Mammary epithelial cell (primary cell): ENCODE measurements at regions of chr1 and their contacts with region 1.

Region 1: GRCh38 chr1:26169669-26170471 is at the start of gene ZNF593:
- DNase-seq: peak; percentile 81
- H3K4me3 ChIP-seq: peak within 1 kb of the TSS; percentile 73 to 84 (median 76)
- H3K27ac ChIP-seq: peak within 1 kb of the TSS; percentile 75
- H3K4me1 ChIP-seq: peaks cover 9% of the 10 kb centered on the region
- H3K27me3 ChIP-seq: no peaks in the 10 kb centered on the region
- CTCF ChIP-seq: peak; percentile 83 to 94
- total RNA-seq, gene ZNF593: 31.5 to 41.5 TPM

Region 2: DNA sequence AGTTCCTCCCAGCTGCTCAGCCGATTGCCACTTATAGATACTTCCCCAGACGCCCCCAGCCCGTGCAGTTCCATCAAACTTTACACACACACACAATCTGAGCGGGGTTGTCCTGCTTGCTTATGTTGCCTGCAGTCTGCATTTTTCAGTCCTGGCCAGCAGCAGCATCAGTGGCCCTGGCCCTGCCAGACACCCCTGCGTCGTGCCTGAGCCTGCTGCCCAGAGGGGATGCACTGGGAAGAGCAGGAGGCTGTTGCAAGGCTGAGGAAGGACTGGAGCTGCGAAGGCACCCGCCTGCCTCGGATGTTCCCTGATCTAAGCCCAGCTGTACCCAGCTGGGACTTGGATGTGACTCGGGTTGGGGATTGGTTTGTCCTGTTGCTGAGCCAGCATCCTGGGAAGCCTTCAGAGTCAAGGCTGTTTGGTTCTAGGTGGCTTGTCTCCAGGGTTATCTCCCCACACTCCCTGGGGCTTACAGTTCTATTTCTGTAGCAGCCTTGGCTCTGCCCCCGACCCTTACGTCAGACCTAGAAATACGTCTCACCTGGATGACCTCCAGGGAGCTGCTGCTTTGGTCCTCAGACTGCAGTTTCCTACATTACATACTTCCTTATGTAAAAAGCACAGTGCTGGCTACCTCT is 511.0 kb before region 1 on chr1:
- CTCF ChIA-PET with region 1: no interaction called
- dilution Hi-C with region 1: no loop called
- in situ Hi-C with region 1: no loop called
- intact Hi-C with region 1: no loop called
- DNase-seq: no peak
- H3K4me3 ChIP-seq: no peak overlapping the region
- H3K27ac ChIP-seq: no peak overlapping the region
- H3K4me1 ChIP-seq: no peaks in the 10 kb centered on the region
- H3K27me3 ChIP-seq: no peaks in the 10 kb centered on the region
- CTCF ChIP-seq: no peak

Region 3: DNA sequence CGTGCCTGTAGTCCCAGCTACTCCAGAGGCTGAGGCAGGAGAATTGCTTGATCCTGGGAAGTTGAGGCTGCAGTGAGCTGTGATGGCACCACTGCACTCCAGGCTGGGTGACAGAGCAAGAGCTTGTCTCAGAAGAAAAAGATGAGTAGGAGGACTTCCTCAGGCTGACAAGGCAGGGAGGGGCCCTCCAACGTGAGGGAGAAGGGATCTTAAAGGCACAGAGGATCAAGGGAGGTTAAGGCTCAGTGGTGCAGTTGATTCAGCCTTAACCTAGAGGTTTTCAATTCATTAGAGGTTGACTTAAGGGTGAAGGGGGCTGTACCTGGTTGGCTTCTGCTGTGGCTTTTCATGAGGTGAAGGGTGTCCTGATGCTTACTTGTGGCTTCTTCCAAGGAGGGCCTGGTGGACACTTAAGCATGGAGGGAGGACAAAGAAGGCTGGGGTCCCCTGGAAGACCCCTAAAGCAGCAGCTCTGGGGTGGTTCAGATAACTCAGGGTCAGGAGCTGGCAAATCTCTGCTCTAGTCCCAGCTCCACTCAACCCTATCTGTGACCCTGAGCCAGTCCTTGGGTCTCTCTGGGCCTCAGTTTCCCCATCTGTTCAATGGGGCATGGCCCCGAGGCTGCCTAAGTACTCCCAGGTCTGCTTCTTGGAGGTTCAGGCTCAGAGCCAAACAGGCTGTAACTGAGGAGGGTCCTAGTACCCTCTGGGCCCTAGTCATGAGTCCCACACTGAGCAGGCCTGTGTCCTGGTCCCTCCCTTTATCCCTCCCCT is 142.0 kb before region 1 on chr1:
- CTCF ChIA-PET with region 1: interaction called, 19 read pairs
- dilution Hi-C with region 1: no loop called
- in situ Hi-C with region 1: loop called in 1 of 2 experiments (anchors 25 kb)
- intact Hi-C with region 1: no loop called
- DNase-seq: peak; percentile 27
- H3K4me3 ChIP-seq: no peak overlapping the region
- H3K27ac ChIP-seq: no peak overlapping the region
- H3K4me1 ChIP-seq: no peaks in the 10 kb centered on the region
- H3K27me3 ChIP-seq: no peaks in the 10 kb centered on the region
- CTCF ChIP-seq: no peak

Region 4: GRCh38 chr1:26094677-26095383 is 75.0 kb before region 1 on chr1:
- CTCF ChIA-PET with region 1: no interaction called
- dilution Hi-C with region 1: no loop called
- in situ Hi-C with region 1: no loop called
- intact Hi-C with region 1: no loop called
- DNase-seq: no peak
- H3K4me3 ChIP-seq: no peak overlapping the region
- H3K27ac ChIP-seq: no peak overlapping the region
- H3K4me1 ChIP-seq: peaks cover 23% of the 10 kb centered on the region
- H3K27me3 ChIP-seq: no peaks in the 10 kb centered on the region
- CTCF ChIP-seq: peak in 1 of 2 donors; percentile 2

Region 5: GRCh38 chr1:26225033-26225831 is 55.4 kb after region 1 on chr1:
- CTCF ChIA-PET with region 1: no interaction called
- dilution Hi-C with region 1: loop called (anchors 5 kb)
- in situ Hi-C with region 1: loop called in 1 of 2 experiments (anchors 5 kb)
- intact Hi-C with region 1: no loop called
- DNase-seq: no peak
- H3K4me3 ChIP-seq: peak overlapping the region in 2 of 3 experiments; percentile 41 to 47
- H3K27ac ChIP-seq: no peak overlapping the region
- H3K4me1 ChIP-seq: peaks cover 4% of the 10 kb centered on the region
- H3K27me3 ChIP-seq: no peaks in the 10 kb centered on the region
- CTCF ChIP-seq: no peak

Region 6: DNA sequence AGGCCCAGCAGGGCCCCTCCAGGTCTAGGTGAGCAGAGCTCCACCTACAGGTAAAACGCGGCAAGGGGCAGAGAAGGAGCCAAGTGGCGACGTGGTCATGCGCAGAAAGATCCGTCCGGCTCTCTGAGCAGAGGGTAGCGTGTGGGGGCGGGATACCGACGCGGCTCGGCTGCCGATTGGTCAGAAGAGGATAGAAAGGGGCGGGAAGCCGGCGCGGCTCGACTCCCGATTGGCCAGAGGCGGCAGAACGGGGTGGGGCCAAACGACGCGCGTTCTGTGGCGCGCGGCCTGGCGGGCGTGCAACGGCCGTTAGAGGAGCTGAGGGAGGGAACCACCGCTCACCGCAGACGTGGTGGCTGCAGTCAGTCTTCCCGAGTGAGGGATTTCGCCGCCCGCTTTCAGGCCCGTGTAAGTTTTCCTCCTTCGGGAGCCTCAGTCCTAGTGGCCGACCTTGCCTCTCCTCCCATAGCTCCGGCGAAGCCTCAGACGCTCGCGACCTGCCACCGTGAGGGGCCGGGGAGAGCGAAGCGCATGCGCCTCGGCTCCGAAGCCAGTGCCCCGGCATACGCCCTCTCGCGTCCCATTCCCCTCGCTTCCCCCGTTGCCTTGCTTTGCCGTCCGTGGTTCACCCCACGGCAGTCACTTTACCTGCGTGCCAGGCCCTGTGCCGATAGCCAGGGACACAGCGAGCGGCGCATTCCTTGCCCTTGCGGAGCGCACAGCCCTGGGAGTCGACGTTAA is 64.2 kb after region 1 on chr1 and contains the start of gene CEP85:
- CTCF ChIA-PET with region 1: interaction called, 8 read pairs
- dilution Hi-C with region 1: loop called (anchors 5 kb)
- in situ Hi-C with region 1: loop called in 1 of 2 experiments (anchors 5 kb)
- intact Hi-C with region 1: loop called (anchors 1 kb)
- DNase-seq: peak; percentile 97
- H3K4me3 ChIP-seq: peak within 1 kb of the TSS; percentile 79 to 97 (median 87)
- H3K27ac ChIP-seq: peak within 1 kb of the TSS; percentile 66
- H3K4me1 ChIP-seq: peaks cover 16% of the 10 kb centered on the region
- H3K27me3 ChIP-seq: no peaks in the 10 kb centered on the region
- CTCF ChIP-seq: peak; percentile 88 to 96
- total RNA-seq, gene CEP85: 14.3 to 16.9 TPM

Region 7: DNA sequence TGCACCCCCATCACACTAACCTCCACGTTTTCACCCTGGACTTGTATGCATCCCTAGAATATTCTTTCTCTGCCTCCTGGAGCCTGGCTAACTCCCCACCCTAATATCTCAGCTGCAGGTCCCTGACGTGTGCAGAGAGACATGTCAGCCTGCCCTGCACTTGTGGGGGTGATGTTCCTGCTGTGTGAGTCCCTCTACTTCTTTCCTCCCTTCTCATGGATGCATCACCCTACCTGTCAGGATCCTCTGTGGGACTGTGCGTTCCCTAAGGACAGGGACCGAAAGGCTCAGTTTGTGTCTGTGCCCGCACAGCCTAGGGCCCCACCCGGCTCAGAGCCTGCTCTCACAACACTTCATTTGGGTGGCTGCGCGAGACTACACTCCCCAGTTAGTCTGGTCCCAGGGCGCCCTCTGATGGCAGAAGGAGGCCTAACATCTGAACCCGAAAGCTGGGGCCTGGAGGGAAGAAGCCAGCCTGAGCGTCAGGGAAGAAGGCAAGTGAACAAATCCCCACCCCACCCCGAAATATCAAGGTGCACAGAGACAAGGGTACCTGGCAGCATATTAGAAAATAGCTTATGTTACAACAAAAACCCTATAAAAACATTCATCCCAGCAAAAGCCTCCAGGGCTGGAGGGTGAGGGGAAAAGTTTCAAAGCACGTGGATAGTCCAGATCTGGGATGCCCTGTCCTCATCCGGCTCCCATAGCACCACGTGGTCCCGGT is 151.6 kb after region 1 on chr1:
- CTCF ChIA-PET with region 1: no interaction called
- dilution Hi-C with region 1: no loop called
- in situ Hi-C with region 1: no loop called
- intact Hi-C with region 1: loop called (anchors 1 kb)
- DNase-seq: peak; percentile 76
- H3K4me3 ChIP-seq: no peak overlapping the region
- H3K27ac ChIP-seq: no peak overlapping the region
- H3K4me1 ChIP-seq: peaks cover 9% of the 10 kb centered on the region
- H3K27me3 ChIP-seq: no peaks in the 10 kb centered on the region
- CTCF ChIP-seq: peak; percentile 78 to 91

Region 8: GRCh38 chr1:26378088-26378878 is 208.4 kb after region 1 on chr1:
- CTCF ChIA-PET with region 1: no interaction called
- dilution Hi-C with region 1: no loop called
- in situ Hi-C with region 1: loop called in 1 of 2 experiments (anchors 25 kb)
- intact Hi-C with region 1: no loop called
- DNase-seq: peak; percentile 87
- H3K4me3 ChIP-seq: no peak overlapping the region
- H3K27ac ChIP-seq: peak overlapping the region; percentile 84
- H3K4me1 ChIP-seq: peaks cover 18% of the 10 kb centered on the region
- H3K27me3 ChIP-seq: no peaks in the 10 kb centered on the region
- CTCF ChIP-seq: no peak